ENCODE measurements at regions of chr6 and their contacts with region 1.

Region 1: DNA sequence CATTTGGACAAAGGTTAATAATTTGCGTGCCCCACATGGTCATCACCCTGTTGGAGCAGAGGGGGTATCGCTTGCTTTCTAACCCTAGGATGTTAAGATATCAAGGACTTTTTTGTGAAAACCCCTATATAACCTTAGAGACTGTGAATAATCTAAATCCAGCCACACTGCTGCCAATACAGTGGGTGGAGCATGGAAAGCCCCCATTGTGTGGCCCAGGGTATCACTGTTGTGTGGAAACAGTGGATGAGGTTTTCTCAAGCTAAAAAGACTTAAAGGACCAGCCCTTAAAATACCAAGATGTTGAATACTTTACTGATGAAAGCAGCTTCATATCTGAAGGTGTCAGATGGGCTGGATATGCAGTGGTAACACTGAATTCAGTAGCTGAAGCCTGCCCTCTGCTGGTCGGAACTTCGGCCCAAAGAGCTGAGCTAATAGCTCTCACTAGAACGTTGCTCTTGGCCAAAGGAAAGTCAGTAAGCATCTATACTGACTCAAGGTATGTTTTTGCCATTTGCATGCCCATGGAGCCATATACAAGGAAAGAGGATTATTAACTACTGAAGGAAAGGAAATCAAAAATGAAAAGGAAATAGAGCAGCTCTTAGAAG is 695.2 kb downstream of the PHF3 start:
- DNase-seq: peak in 41 of 42 donors; percentile 60 to 93 (median 80)

Region 2: DNA sequence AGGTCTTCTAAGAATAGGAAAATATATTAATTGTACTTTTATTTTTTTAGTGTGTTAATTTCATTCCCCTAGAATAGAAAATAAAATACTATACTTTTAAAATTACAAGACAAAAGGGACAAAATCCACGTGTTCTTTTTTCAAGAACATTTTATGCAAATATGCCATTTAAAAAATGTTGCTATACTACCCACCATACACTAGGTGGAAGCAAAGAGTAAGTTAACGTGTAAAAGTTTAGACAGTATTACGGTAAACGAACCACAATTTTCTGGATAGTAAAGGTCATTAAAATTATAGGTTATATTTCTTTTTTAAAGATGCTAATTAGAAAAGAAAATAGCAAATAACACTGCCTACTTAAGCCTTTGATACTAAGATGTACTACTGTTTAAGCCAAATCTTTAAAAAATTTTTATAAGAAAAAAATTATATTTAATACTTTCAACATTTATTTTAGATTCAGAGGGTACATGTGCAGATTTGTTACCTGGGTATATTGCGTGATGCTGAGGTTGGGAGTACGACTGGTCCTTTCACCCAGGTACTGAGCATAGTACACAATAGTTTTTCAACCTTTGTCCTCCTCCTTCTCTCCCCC is 407.6 kb before region 1 on chr6:
- intact Hi-C with region 1: loop called (anchors 10 kb)
- DNase-seq: no peak

Region 3: DNA sequence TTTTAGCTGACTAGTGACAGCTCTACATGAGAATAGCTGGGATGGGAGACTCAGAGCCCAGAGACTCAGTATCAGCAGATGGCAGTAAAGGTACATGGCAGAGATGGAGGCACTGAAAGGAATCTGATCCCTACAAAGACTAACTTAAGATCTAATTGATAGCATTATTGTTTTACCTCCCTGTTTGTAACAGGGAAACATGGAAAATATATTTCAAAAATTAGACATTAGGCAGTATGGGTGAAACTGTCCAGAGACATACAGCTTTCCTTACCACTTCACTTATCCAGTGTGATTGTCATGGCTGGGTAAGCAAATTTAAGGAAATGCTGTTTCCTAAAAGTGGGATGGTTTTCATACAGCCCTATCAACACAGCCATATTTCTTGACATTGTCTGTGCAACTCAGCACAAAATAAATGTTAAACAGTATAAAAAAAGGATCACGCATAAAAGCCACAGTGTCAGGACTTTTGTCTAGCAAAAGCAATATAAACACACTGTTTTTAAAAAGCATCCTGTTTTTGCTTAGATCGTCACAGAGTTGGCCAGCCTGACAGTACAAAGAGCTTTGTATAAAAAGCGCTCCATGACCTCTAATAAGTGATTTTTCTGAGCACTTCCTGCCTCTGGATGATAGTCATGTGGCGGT is 318.3 kb before region 1 on chr6:
- intact Hi-C with region 1: loop called (anchors 5 kb)
- DNase-seq: peak in 33 of 42 donors; percentile 10 to 79 (median 57)

Region 4: DNA sequence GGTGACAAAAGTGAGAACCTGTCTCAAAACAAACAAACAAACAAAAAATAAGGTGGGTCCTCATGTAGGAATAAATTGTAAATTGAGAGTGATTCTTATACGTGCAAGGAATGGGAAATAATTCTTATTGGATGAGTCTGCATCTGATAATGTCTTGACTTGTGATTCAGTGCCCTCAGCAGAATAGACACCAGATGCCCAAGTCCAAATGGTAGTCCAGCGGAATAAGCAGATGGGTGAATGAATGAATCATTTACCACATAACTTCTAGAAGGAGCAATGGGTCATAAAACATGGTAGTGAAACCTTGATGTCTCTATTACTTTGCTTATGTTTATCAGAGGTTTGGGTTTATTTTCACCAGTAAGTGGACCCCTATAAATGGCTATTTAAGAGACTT is 52.5 kb after region 1 on chr6:
- intact Hi-C with region 1: no loop called
- DNase-seq: no peak

Region 5: GRCh38 chr6:64404396-64404795 is 73.6 kb after region 1 on chr6:
- intact Hi-C with region 1: no loop called
- DNase-seq: no peak

Region 6: GRCh38 chr6:64890604-64891003 is 559.8 kb after region 1 on chr6:
- intact Hi-C with region 1: no loop called
- DNase-seq: no peak

Measured in head of caudate nucleus (tissue), 42 donors.